ENCODE measurements at regions of chr2 and their contacts with region 1.

Region 1: GRCh38 chr2:85209887-85210286 is 76.7 kb downstream of the TCF7L1 start:
- DNase-seq: no peak
- H3K4me3 Mint-ChIP-seq: no peak overlapping the region
- H3K27ac Mint-ChIP-seq: no peak overlapping the region
- H3K4me1 Mint-ChIP-seq: no peaks in the 10 kb centered on the region
- H3K27me3 Mint-ChIP-seq: peaks cover 28% of the 10 kb centered on the region
- CTCF ChIP-seq: no peak

Region 2: GRCh38 chr2:85222792-85223191 is 12.9 kb after region 1 on chr2:
- CTCF ChIA-PET with region 1: interaction called, 10 read pairs
- intact Hi-C with region 1: no loop called
- DNase-seq: no peak
- H3K4me3 Mint-ChIP-seq: no peak overlapping the region
- H3K27ac Mint-ChIP-seq: no peak overlapping the region
- H3K4me1 Mint-ChIP-seq: no peaks in the 10 kb centered on the region
- H3K27me3 Mint-ChIP-seq: peaks cover 29% of the 10 kb centered on the region
- CTCF ChIP-seq: no peak

Measured in Calu3 (cell line).